ENCODE measurements at regions of chr7 and their contacts with region 1.

Region 1: DNA sequence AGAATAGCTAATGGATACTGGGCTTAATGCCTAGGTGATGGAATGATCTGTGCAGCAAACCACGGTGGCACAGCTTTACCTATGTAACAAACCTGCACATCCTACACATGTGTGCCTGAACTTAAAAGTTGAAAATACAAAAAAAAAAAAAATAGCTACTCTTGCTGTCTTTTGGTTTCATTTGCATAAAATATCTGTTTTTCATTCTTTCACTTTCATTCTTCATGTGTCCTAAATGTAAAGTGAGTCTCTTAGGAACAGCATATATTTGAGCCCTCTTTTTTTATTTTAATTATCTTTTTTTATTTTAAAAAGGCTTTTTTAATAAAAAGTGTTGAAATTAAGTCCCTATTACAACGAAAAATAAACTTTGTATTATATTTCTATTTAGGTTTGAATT is 836.1 kb upstream of the KCND2 start:
- DNase-seq: no peak
- ATAC-seq: no peak
- H3K4me3 ChIP-seq: no peak overlapping the region
- H3K27ac ChIP-seq: no peak overlapping the region
- H3K4me1 ChIP-seq: no peaks in the 10 kb centered on the region
- H3K27me3 ChIP-seq: no peaks in the 10 kb centered on the region
- CTCF ChIP-seq: no peak

Region 2: GRCh38 chr7:120894254-120894653 is 1457.4 kb after region 1 on chr7:
- CTCF ChIA-PET with region 1: no interaction called
- POLR2A ChIA-PET with region 1: interaction called, 28 read pairs
- intact Hi-C with region 1: no loop called
- DNase-seq: no peak
- ATAC-seq: no peak
- H3K4me3 ChIP-seq: no peak overlapping the region
- H3K27ac ChIP-seq: no peak overlapping the region
- H3K4me1 ChIP-seq: no peaks in the 10 kb centered on the region; the same call in 1 of the 2 replicates
- H3K27me3 ChIP-seq: no peaks in the 10 kb centered on the region
- CTCF ChIP-seq: no peak